Dendritic cell treated with granulocyte-macrophage colony-stimulating factor and Interleukin-4, amounts not matched to agents 40 ng/mL and 50 ng/mL, for 4 days (primary cell): ENCODE measurements at regions of chr15 and their contacts with region 1.

Region 1: DNA sequence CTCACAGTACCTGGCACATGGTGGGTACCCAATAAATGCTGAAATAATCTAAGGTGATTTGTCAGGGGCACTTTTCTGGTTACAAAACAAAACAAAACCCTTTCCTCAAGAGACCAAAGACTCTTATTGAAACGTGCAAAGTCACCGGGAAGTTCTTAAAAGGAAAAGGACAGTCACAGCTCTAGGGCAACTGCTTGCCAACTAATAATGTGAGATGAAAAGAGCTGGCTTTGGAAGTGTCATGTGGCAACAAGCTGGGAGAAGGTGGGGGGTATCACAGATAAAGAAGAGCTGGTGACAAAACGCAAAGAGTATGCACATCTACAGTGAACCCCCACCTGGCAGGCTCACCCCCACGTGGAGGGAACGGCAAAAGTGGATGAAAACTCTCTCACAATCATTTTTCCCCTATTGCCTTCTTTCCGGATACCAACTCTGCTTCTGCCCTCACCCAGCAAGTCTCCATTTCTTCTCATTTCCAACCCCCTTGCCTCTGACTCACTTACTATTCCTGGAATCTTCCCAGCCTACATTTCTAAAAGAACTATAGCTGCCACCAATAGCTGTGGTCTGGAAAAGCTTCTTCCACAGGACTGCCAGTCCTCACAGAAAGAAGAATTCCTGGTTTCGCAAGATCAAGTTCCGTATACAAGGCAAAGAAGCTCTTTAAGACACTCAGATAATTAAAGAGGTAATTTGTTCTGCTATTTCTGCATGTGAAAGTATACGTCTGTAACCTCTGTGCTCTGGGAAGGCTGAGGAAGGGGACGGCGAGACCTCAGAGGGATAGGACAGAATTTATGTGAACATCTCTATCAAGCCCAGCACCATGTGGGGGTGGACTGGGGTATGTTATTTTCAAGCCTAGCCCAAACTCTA is 21.8 kb upstream of the ANPEP start:
- H3K4me3 Mint-ChIP-seq: peak overlapping the region; percentile 18
- H3K27ac Mint-ChIP-seq: peak overlapping the region; percentile 89
- H3K4me1 Mint-ChIP-seq: peaks cover 82% of the 10 kb centered on the region
- H3K27me3 Mint-ChIP-seq: no peaks in the 10 kb centered on the region

Region 2: DNA sequence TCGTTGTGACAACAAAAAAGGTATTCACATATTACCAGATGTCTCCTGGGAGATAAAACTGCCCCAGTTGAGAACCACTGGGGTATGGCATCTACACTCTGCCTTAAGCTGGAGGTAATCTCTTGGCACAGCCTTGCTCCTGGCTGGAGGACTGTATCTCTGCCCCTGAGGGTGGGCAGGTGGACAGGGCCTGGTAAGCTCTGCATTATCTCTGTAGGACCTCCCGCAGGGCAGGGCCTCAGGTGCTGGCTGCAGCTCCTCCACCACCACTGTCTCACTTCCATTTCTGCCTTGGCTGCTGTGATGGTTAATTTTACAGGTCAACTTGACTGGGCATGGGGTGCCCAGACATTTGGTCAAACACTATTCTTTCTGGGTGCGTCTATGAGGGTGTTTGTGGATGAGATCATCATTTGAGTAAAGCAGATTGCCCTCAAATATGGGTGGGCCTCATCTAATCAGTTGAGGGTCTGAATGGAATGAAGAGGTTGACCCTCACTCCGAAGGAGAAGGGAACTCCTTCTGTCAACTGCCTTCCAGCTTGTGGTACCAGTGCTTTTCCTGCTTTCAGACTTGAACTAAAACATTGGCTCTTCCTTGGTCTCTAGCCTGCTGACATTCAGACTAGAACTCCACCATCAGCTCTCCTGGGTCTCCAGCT is 330.3 kb before region 1 on chr15:
- intact Hi-C with region 1: no loop called
- H3K4me3 Mint-ChIP-seq: no peak overlapping the region
- H3K27ac Mint-ChIP-seq: no peak overlapping the region
- H3K4me1 Mint-ChIP-seq: no peaks in the 10 kb centered on the region
- H3K27me3 Mint-ChIP-seq: peaks cover 10% of the 10 kb centered on the region

Region 3: DNA sequence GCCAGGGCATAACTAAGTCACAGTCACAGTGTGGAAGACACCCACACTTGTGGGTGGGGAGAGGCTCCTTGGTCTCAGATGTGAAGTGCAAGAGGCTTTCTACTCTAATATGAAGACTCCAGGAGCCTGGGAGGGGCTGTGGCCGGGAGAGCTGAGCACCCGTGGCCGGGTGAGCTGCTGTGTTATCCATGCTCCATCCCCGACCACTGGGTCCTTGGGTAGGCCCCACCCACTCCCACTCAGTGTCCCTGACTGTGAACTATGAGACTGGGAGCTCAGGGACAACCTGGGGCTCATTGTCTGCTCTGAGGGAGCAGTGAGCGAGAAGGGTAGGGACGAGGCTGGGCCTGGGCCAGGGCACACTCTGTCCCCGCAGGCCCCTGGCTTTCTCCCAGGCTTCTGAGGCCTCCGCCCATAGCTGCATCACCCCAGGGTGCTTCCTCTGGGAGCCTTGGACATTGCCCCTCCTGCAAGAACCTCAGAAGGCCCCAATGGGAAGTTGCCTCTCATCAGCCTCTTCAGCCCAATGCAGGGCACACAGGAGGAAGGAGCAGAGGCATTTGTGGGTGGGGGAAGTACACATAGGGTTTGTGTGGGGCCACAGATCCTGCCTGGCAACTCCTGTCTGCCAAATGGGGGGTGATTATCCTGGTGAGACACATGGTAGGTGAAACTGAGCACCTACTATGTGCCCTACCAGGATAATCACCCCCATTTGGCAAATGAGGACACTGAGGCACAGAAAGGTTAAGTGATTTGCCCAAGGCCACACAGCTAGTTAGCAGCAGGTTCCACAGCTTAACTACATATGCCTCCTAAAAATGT is 24.3 kb before region 1 on chr15:
- intact Hi-C with region 1: loop called (anchors 1 kb)
- H3K4me3 Mint-ChIP-seq: peak overlapping the region; percentile 90
- H3K27ac Mint-ChIP-seq: peak overlapping the region; percentile 93
- H3K4me1 Mint-ChIP-seq: peaks cover 78% of the 10 kb centered on the region
- H3K27me3 Mint-ChIP-seq: no peaks in the 10 kb centered on the region

Region 4: GRCh38 chr15:89848970-89849292 is 12.4 kb after region 1 on chr15:
- intact Hi-C with region 1: loop called (anchors 1 kb)
- H3K4me3 Mint-ChIP-seq: peak overlapping the region; percentile 42
- H3K27ac Mint-ChIP-seq: peak overlapping the region; percentile 88
- H3K4me1 Mint-ChIP-seq: peaks cover 85% of the 10 kb centered on the region
- H3K27me3 Mint-ChIP-seq: no peaks in the 10 kb centered on the region

Region 5: DNA sequence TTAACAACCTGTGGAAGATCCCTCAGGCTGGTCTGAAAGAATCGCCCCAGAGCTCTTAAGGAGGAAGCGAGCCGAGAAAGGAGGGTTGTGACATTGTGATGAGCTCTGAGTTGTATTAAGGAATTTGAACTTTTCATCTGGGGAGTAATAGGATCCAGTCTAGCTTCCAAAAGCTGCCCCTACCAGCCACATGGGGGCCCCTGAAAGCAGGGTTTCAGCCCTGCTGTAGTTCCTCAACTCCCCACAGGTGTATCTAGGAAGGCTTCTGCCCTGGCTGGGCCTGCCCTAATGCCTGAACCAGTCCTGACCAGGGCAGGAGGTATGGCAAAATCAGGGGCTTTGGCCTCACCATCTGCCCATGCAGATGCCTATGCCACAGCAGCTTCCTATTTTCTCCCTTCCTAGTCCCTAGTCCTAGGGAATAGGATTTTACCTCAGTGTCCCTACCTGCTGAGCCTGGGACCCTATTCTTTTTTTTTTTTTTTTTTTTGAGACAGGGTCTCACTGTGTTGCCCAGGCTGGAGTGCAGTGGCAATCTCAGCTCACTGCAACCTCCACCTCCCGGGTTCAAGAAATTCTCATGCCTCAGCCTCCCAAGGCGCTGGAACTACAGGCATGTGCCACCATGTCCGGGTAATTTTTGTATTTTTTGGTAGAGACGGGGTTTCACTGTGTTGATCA is 62.3 kb after region 1 on chr15:
- intact Hi-C with region 1: no loop called
- H3K4me3 Mint-ChIP-seq: no peak overlapping the region
- H3K27ac Mint-ChIP-seq: peak overlapping the region; percentile 72
- H3K4me1 Mint-ChIP-seq: peaks cover 40% of the 10 kb centered on the region
- H3K27me3 Mint-ChIP-seq: no peaks in the 10 kb centered on the region